Activated naive CD4-positive, alpha-beta T cell treated with anti-CD3 and anti-CD28 coated beads, Interleukin-2, amount 10 ng/mL, durations not matched to agents 7 days and 5 days (primary cell): ENCODE measurements at regions of chr6 and their contacts with region 1.

Region 1: DNA sequence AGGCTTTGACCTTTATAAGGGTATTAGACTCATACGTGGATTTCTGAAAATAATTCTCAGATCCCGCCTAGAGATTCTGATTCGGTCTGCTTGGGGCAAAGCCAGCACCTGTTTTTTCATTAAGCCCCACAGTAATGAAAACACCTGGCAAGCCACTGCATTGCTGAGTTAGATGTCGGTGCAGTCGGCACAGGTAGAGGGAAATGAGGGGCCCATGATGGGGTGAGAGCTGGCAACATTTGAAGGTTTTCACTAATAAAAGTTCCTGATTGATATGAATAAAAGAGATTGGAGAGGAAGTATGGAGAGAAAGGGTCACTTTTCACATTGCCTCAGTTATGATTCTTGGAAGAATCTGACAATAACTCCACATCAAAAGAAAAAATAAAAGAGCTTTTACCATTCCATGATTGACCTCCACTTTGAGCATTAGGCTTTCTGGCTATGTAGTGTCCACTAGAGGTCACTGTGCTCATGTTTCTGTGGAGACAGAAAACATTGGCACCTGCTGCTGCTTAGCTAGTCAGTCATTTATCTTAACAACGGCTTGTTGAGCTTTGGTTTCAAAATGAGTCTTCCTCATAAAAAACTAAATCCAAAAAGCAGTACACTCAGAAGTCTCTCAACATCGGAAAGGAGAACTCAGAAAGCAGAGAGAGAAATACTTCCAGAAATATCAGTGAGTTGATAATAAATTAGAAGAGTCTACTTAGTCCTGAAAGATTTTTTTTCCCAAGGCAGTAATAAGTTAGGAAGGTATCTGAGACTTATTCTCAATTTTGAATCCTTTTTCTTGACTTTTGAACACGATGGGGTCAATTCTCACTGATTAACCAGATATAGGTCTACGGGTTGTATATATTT is 53.3 kb upstream of the KLHL31 start:
- DNase-seq: peak; percentile 40
- H3K4me3 Mint-ChIP-seq: no peak overlapping the region
- H3K27ac Mint-ChIP-seq: no peak overlapping the region
- H3K4me1 Mint-ChIP-seq: peaks cover 2% of the 10 kb centered on the region
- H3K27me3 Mint-ChIP-seq: peaks cover 36% of the 10 kb centered on the region

Region 2: GRCh38 chr6:53492860-53493634 is 225.8 kb before region 1 on chr6:
- CTCF ChIA-PET with region 1: interaction called, 134 read pairs
- DNase-seq: no peak
- H3K4me3 Mint-ChIP-seq: no peak overlapping the region
- H3K27ac Mint-ChIP-seq: no peak overlapping the region
- H3K4me1 Mint-ChIP-seq: peaks cover 2% of the 10 kb centered on the region
- H3K27me3 Mint-ChIP-seq: peaks cover 16% of the 10 kb centered on the region

Region 3: DNA sequence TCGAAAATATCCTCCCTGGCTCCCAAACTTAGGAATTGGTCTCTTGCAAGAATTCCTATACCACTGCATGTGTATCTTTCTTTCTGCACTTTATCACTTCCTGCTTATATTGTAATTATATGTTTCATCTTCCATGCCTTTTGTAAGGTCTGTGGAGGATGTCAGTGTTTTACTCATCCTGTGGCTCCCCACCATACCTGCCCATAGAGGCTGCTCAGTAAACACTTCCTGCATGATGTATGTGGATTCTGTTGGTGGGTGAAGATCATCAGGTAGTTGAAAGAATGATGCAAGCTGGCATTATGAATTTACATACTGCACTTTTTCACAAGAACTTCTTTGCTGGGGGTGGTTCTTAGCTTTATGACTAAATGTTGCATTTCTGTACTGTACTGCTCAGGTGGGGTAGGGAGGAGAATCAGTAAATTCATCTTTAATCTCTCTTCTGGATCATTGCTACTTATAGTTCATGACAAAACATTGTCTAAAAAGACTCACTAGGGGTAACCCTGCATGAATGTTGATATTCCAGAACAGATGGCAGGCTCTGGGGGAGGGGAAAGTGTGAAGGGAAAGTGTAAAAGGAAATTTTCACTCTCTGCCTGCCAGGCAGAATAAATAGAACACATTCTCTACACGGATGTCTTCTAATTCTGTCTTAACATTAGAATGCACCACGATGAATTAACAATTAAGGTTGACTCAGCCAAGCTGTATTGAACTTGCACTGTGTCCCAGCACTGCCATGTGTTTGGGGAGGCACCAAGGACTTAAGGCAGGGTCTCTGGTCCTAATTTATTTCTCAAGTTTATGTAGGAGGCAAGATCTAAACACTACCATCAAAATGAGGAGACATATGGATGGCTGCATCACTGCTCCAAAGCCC is 17.3 kb before region 1 on chr6:
- CTCF ChIA-PET with region 1: interaction called, 12 read pairs
- DNase-seq: no peak
- H3K4me3 Mint-ChIP-seq: no peak overlapping the region
- H3K27ac Mint-ChIP-seq: no peak overlapping the region
- H3K4me1 Mint-ChIP-seq: peaks cover 8% of the 10 kb centered on the region
- H3K27me3 Mint-ChIP-seq: peaks cover 9% of the 10 kb centered on the region

Region 4: DNA sequence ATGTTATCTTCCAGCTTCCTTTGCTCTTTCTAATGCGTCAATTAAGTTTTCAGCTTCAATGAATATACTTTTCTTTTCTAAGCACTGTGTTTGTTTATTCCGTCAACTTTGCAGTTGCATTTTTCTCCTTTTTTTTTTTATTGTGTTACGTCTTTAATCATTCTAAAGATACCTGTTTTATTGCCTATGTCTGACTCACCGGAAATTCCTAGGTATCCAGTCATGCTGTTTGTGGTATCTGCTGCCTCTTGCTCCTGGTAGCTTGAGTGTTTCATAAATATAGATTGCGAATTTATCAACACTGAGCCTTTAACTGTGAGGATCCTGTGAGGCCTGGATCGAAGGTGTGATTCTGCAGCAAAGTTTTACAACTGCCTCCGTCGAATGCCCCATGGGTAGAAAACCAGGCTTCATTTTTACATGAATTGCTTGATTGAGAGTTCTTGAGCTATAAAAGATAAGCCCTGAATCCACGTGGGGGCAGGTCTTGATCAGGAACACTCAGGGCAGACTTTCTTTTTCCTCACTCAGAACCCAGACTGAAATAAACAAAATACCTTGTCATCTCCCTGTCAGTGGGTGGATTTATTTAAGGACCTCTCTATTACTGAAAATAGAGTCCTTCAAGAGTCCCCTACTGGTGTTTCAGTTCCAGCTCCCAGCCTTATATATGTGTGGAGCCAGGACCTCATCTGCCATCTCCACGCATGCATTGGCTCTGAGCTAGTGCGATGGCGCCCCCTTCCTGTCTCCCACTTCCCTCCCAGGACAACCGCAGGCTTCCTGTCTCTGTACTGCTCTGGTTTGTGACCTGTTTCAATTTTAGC is 15.9 kb after region 1 on chr6:
- CTCF ChIA-PET with region 1: interaction called, 54 read pairs
- DNase-seq: peak; percentile 52
- H3K4me3 Mint-ChIP-seq: no peak overlapping the region
- H3K27ac Mint-ChIP-seq: no peak overlapping the region
- H3K4me1 Mint-ChIP-seq: peaks cover 28% of the 10 kb centered on the region
- H3K27me3 Mint-ChIP-seq: peaks cover 10% of the 10 kb centered on the region

Region 5: GRCh38 chr6:53938810-53939209 is 220.0 kb after region 1 on chr6:
- CTCF ChIA-PET with region 1: no interaction called
- DNase-seq: no peak
- H3K4me3 Mint-ChIP-seq: no peak overlapping the region
- H3K27ac Mint-ChIP-seq: no peak overlapping the region
- H3K4me1 Mint-ChIP-seq: no peaks in the 10 kb centered on the region
- H3K27me3 Mint-ChIP-seq: peaks cover 6% of the 10 kb centered on the region

Region 6: DNA sequence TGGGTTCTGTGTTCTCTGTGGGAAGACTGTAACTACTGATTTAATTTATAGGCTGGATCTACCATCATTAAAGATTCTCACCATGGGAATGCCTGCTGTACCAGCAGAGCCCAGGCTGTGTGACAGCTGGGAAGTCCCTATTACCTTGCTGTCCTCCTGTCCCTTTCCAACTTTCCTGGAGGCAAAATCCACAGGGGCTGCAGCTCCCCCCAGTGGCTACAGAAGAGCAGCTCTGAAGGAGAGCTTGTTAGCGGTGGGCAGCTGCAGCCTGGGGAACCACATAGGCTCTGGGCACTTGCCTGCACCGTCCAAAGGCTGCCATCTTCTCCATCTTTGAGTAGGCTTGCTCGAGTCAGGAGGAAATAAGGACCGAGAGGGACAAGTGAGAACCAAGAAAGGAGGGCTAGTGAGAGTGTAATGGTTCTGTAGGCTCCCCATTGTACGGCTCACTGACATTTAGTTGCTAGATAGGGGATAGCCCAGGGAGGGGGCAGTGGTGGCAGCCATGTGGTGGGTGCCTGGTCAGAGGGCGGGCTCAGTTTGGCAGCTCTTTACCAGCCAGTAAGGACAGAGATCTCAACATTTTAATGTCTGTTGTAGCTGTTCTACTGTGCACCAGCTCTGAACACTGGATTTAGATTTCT is 237.4 kb after region 1 on chr6:
- CTCF ChIA-PET with region 1: interaction called, 14 read pairs
- DNase-seq: no peak
- H3K4me3 Mint-ChIP-seq: no peak overlapping the region
- H3K27ac Mint-ChIP-seq: no peak overlapping the region
- H3K4me1 Mint-ChIP-seq: no peaks in the 10 kb centered on the region
- H3K27me3 Mint-ChIP-seq: peaks cover 5% of the 10 kb centered on the region

Region 7: GRCh38 chr6:54156650-54157250 is 437.9 kb after region 1 on chr6:
- CTCF ChIA-PET with region 1: no interaction called
- DNase-seq: no peak
- H3K4me3 Mint-ChIP-seq: no peak overlapping the region
- H3K27ac Mint-ChIP-seq: no peak overlapping the region
- H3K4me1 Mint-ChIP-seq: no peaks in the 10 kb centered on the region
- H3K27me3 Mint-ChIP-seq: no peaks in the 10 kb centered on the region